ENCODE measurements at regions of chr4 and their contacts with region 1.

Region 1: GRCh38 chr4:145148980-145149379 is 31.4 kb downstream of the OTUD4 start:
- DNase-seq: no peak
- H3K4me3 ChIP-seq: no peak overlapping the region
- H3K4me3 Mint-ChIP-seq: no peak overlapping the region
- H3K27ac ChIP-seq: no peak overlapping the region
- H3K27ac Mint-ChIP-seq: peak overlapping the region in 1 of 7 donors; percentile 79
- H3K4me1 ChIP-seq: no peaks in the 10 kb centered on the region
- H3K4me1 Mint-ChIP-seq: peaks cover 0 to 4% (median 0%) of the 10 kb centered on the region in 4 donors
- H3K27me3 ChIP-seq: no peaks in the 10 kb centered on the region
- H3K27me3 Mint-ChIP-seq: no peaks in the 10 kb centered on the region

Region 2: GRCh38 chr4:145107126-145107525 is 41.9 kb before region 1 on chr4:
- CTCF ChIA-PET with region 1: no interaction called
- POLR2A ChIA-PET with region 1: no interaction called
- intact Hi-C with region 1: loop called (anchors 5 kb)
- DNase-seq: no peak
- H3K4me3 ChIP-seq: no peak overlapping the region
- H3K4me3 Mint-ChIP-seq: no peak overlapping the region
- H3K27ac ChIP-seq: no peak overlapping the region
- H3K27ac Mint-ChIP-seq: peak overlapping the region in 2 of 7 donors; percentile 31 to 69
- H3K4me1 ChIP-seq: peaks cover 20% of the 10 kb centered on the region
- H3K4me1 Mint-ChIP-seq: peaks cover 0 to 11% (median 5%) of the 10 kb centered on the region in 4 donors
- H3K27me3 ChIP-seq: no peaks in the 10 kb centered on the region
- H3K27me3 Mint-ChIP-seq: no peaks in the 10 kb centered on the region

Region 3: DNA sequence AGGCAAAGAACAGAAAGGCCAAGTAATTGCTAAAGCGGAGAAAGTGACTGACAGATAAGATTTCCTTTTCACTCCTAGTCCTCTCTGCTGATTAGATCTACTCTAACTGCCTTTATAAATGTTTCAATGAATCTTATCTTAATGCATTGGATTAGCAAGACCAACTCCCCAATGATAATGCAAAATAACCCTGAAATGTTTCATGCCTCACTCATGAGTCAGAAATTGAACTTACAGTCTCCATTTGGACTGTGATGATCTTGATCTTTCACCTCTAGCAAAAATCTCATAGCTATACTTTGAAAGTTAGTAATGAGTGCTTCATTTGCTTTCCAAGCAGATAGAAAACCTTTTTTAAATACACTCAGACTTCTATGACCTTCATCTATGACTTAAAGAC is 1346.3 kb after region 1 on chr4:
- CTCF ChIA-PET with region 1: no interaction called
- POLR2A ChIA-PET with region 1: no interaction called
- intact Hi-C with region 1: no loop called
- DNase-seq: no peak
- H3K4me3 ChIP-seq: no peak overlapping the region
- H3K4me3 Mint-ChIP-seq: no peak overlapping the region
- H3K27ac ChIP-seq: no peak overlapping the region
- H3K27ac Mint-ChIP-seq: peak overlapping the region in 2 of 7 donors; percentile 2 to 42
- H3K4me1 ChIP-seq: peaks cover 4% of the 10 kb centered on the region
- H3K4me1 Mint-ChIP-seq: peaks cover 15 to 38% (median 31%) of the 10 kb centered on the region in 4 donors
- H3K27me3 ChIP-seq: no peaks in the 10 kb centered on the region
- H3K27me3 Mint-ChIP-seq: no peaks in the 10 kb centered on the region